HepG2 (cell line): ENCODE measurements at regions of chr2 and their contacts with region 1.

Region 1: GRCh38 chr2:85577386-85578242 is at the start of gene VAMP8:
- DNase-seq: peak; percentile 44
- ATAC-seq: peak; percentile 86
- H3K4me3 ChIP-seq: peak within 1 kb of the TSS; percentile 79 to 90 (median 87)
- H3K27ac ChIP-seq: peak within 1 kb of the TSS; percentile 64
- H3K4me1 ChIP-seq: peaks cover 58% of the 10 kb centered on the region
- H3K27me3 ChIP-seq: peaks cover 0 to 3% of the 10 kb centered on the region in 2 experiments; a peak in 2 of 5 replicates
- CTCF ChIP-seq: no peak
- EP300 ChIP-seq: no peak
- POLR2A ChIP-seq: peak; percentile 41 to 69; a peak in 3 of 4 replicates
- RAD21 ChIP-seq: no peak; the same call in 1 of the 2 replicates
- total RNA-seq, gene VAMP8: 83.3 and 97.0 TPM in 2 replicates

Region 2: DNA sequence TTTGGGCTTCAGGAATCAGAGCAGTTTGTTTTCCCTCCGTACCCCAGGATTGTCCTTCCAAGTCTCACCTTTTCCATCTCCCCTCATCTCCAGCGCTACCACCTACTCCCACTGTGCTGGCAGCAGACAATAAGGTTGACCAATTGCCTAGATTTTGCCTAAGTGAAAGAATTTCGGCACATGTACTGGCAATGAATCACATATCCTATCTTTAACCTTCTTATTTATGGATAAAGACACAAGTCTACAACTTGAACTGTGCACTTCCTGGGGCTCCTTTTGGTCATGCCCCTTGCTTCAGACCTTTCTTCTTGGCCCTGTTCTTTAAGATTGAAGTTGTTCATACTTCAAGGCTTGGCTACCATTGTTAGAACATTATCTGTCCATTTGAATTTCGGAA is 535.3 kb before region 1 on chr2:
- CTCF ChIA-PET with region 1: no interaction called
- POLR2A ChIA-PET with region 1: no interaction called
- in situ Hi-C with region 1: no loop called
- intact Hi-C with region 1: no loop called
- DNase-seq: no peak
- ATAC-seq: no peak
- H3K4me3 ChIP-seq: no peak overlapping the region
- H3K27ac ChIP-seq: no peak overlapping the region
- H3K4me1 ChIP-seq: no peaks in the 10 kb centered on the region
- H3K27me3 ChIP-seq: no peaks in the 10 kb centered on the region
- CTCF ChIP-seq: no peak
- EP300 ChIP-seq: no peak
- POLR2A ChIP-seq: no peak
- RAD21 ChIP-seq: no peak

Region 3: DNA sequence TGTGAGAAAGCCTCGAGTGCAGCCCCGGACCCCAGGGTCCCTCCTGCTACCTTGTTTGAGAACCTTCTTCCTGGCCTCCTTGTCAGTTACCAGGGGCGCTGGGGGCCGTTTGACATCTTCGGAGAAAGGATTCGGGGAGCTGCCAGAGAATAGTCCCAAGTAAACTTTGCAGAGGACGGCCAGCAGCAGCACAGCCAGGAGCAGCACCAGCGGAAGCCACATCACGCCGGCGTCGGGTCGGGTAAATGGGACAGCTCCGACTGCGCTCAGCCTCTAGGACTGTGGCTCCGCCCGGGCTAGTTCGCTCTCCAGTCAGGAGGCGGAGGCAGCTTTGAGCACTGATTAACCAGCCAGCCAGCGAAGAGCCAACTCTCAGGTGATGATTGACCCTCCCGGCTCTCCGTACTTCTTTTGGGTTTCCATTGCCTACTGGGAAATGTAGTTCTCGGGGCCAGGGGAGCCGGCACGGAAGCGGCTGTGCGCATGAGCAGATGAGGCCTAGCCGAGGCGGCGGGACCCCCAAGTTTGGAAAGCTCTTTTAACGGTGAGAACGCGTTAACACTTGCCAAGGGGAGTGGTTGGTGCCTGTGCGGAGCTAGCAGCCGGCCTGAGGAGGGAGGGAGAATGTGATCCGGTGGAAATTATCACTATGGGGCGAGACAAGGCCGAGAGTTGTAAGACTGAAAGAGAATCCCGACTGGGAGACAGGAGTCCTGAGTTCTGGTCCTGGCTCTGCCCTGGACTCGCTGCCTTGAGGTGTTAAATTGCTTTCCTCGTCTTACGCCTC is 223.1 kb before region 1 on chr2 and contains the starts of genes ELMOD3 and RETSAT:
- CTCF ChIA-PET with region 1: no interaction called
- POLR2A ChIA-PET with region 1: no interaction called
- in situ Hi-C with region 1: no loop called
- intact Hi-C with region 1: no loop called
- DNase-seq: peak; percentile 100
- ATAC-seq: peak; percentile 98
- H3K4me3 ChIP-seq: peak within 1 kb of the TSS; percentile 89 to 93 (median 91)
- H3K27ac ChIP-seq: peak within 1 kb of the TSS; percentile 72
- H3K4me1 ChIP-seq: peaks cover 33% of the 10 kb centered on the region
- H3K27me3 ChIP-seq: no peaks in the 10 kb centered on the region; a peak in 1 of 5 replicates
- CTCF ChIP-seq: peak; percentile 13; the same call in 1 of the 2 replicates
- EP300 ChIP-seq: peak in 1 of 2 experiments; percentile 61; a peak in 1 of 4 replicates
- POLR2A ChIP-seq: peak; percentile 100
- RAD21 ChIP-seq: peak; percentile 67
- total RNA-seq, gene ELMOD3: 10.3 and 13.3 TPM in 2 replicates
- total RNA-seq, gene RETSAT: 17.2 and 46.7 TPM in 2 replicates

Region 4: DNA sequence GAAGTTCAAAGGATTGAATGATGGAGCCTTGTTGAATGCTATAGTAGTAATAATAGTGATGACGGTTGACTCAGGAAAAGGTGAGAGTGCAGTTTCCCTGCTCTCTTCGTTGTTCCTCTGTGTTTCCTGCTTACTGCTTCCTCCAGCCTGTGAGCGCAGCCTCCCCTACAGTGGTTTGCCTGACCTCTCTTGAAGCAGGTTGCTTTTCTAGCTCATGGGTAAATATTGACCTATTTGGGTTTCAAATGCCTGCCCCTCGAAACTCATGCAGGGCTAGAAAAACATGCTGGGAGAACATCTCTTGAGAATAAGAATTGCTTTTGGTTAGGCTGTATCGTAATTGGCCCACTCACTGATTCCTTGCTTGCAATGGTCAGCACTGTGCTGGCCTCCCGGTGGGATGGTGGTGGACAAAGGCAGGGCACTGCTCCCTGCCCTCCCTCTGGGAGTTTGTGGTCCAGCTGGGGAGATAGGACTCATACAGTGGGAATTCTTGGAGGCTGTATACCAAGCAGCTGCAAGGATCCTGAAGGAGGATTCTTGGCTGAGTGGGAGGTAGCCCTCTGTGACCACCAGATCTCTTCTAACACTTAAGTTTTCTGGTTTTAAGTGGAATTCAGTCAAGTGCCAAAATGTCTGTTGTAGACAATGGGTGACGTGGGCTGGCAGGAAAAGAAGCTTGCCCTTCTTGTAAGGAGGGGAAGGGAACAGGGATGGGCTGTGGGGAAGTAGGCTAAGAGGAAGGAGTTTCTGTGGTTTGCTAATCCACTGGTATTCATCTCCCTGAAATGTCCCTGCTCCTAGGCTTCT is 12.6 kb after region 1 on chr2:
- CTCF ChIA-PET with region 1: no interaction called
- POLR2A ChIA-PET with region 1: interaction called, 795 read pairs
- in situ Hi-C with region 1: no loop called
- intact Hi-C with region 1: loop called (anchors 1 kb)
- DNase-seq: peak; percentile 82
- ATAC-seq: peak; percentile 56
- H3K4me3 ChIP-seq: peak overlapping the region in 1 of 3 experiments; percentile 29; a peak in 2 of 6 replicates
- H3K27ac ChIP-seq: no peak overlapping the region
- H3K4me1 ChIP-seq: peaks cover 95% of the 10 kb centered on the region
- H3K27me3 ChIP-seq: no peaks in the 10 kb centered on the region
- CTCF ChIP-seq: peak; percentile 34
- EP300 ChIP-seq: peak in 1 of 2 experiments; percentile 73; a peak in 1 of 4 replicates
- POLR2A ChIP-seq: peak; percentile 34 to 45; a peak in 2 of 4 replicates
- RAD21 ChIP-seq: no peak; the same call in 1 of the 2 replicates

Region 5: GRCh38 chr2:85595301-85596025 is 17.8 kb after region 1 on chr2 and contains the start of gene RNF181:
- CTCF ChIA-PET with region 1: no interaction called
- POLR2A ChIA-PET with region 1: interaction called, 795 read pairs
- in situ Hi-C with region 1: no loop called
- intact Hi-C with region 1: no loop called
- DNase-seq: peak; percentile 99
- ATAC-seq: peak; percentile 92
- H3K4me3 ChIP-seq: peak within 1 kb of the TSS; percentile 88 to 97 (median 90)
- H3K27ac ChIP-seq: peak within 1 kb of the TSS; percentile 80
- H3K4me1 ChIP-seq: peaks cover 86% of the 10 kb centered on the region
- H3K27me3 ChIP-seq: no peaks in the 10 kb centered on the region; a peak in 1 of 5 replicates
- CTCF ChIP-seq: no peak
- EP300 ChIP-seq: no peak
- POLR2A ChIP-seq: peak in 1 of 2 experiments; percentile 77; a peak in 1 of 4 replicates
- RAD21 ChIP-seq: no peak; the same call in 1 of the 2 replicates
- total RNA-seq, gene RNF181: 224 and 234 TPM in 2 replicates

Region 6: GRCh38 chr2:85602476-85603234 is 25.0 kb after region 1 on chr2 and contains the start of gene TMEM150A:
- CTCF ChIA-PET with region 1: no interaction called
- POLR2A ChIA-PET with region 1: interaction called, 795 read pairs
- in situ Hi-C with region 1: no loop called
- intact Hi-C with region 1: loop called (anchors 1 kb)
- DNase-seq: peak; percentile 87
- ATAC-seq: peak; percentile 90
- H3K4me3 ChIP-seq: peak within 1 kb of the TSS; percentile 84 to 98 (median 91)
- H3K27ac ChIP-seq: peak within 1 kb of the TSS; percentile 80
- H3K4me1 ChIP-seq: peaks cover 85% of the 10 kb centered on the region
- H3K27me3 ChIP-seq: no peaks in the 10 kb centered on the region; a peak in 1 of 5 replicates
- CTCF ChIP-seq: peak; percentile 46
- EP300 ChIP-seq: peak in 1 of 2 experiments; percentile 34; a peak in 1 of 4 replicates
- POLR2A ChIP-seq: peak in 1 of 2 experiments; percentile 66; a peak in 2 of 4 replicates
- RAD21 ChIP-seq: peak; percentile 89
- total RNA-seq, gene TMEM150A: 24.0 and 30.1 TPM in 2 replicates

Region 7: GRCh38 chr2:85611705-85612587 is 34.3 kb after region 1 on chr2 and contains the start of gene C2orf68:
- CTCF ChIA-PET with region 1: no interaction called
- POLR2A ChIA-PET with region 1: interaction called, 795 read pairs
- in situ Hi-C with region 1: no loop called
- intact Hi-C with region 1: no loop called
- DNase-seq: peak; percentile 86
- ATAC-seq: peak; percentile 85
- H3K4me3 ChIP-seq: peak within 1 kb of the TSS; percentile 92 to 100 (median 95)
- H3K27ac ChIP-seq: peak within 1 kb of the TSS; percentile 58
- H3K4me1 ChIP-seq: peaks cover 69% of the 10 kb centered on the region
- H3K27me3 ChIP-seq: no peaks in the 10 kb centered on the region; a peak in 1 of 5 replicates
- CTCF ChIP-seq: no peak
- EP300 ChIP-seq: no peak
- POLR2A ChIP-seq: peak; percentile 52 to 90; a peak in 3 of 4 replicates
- RAD21 ChIP-seq: peak; percentile 63
- total RNA-seq, gene C2orf68: 47.1 and 49.0 TPM in 2 replicates